PC-9 (cell line): ENCODE measurements at regions of chr2 and their contacts with region 1.

Region 1: DNA sequence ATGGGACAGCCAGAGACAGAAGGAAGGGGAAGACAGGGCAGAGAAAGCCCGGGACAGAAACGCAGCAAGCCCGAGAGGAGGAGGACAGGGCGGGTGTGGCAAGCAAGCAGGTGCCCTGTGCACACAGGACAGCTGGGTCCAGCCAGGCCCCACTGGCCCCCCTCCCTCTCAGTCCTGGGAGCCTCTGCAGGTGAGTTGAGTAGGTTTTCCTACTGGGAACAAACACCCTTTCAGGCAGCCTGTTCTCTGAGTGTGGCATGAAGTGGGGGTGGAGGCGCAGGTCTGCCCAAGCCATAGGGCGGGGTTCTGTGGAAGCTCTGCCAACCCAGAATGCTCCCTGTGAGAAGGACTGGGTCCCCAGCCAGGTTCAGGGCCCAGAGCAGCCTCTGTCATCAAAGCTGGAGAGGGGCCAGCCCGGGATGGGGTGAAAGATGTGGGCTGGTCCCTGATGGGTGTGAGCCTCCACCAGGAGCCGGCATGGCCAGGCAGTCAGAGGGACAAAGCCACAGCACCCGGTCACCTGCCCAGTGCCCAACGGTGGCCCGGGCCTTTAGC is 129.4 kb downstream of the TFCP2L1 start:
- DNase-seq: peak in 1 of 2 experiments; percentile 63
- H3K4me3 ChIP-seq: no peak overlapping the region
- H3K27ac ChIP-seq: no peak overlapping the region
- H3K4me1 ChIP-seq: peaks cover 20% of the 10 kb centered on the region
- H3K27me3 ChIP-seq: no peaks in the 10 kb centered on the region
- CTCF ChIP-seq: no peak

Region 2: GRCh38 chr2:121197369-121198091 is 42.0 kb after region 1 on chr2:
- CTCF ChIA-PET with region 1: no interaction called
- POLR2A ChIA-PET with region 1: no interaction called
- intact Hi-C with region 1: loop called (anchors 5 kb)
- DNase-seq: peak; percentile 82 to 93
- H3K4me3 ChIP-seq: peak overlapping the region; percentile 22; the same call in 1 of the 2 replicates
- H3K27ac ChIP-seq: peak overlapping the region; percentile 87
- H3K4me1 ChIP-seq: peaks cover 43% of the 10 kb centered on the region
- H3K27me3 ChIP-seq: no peaks in the 10 kb centered on the region
- CTCF ChIP-seq: no peak